WTC11 (cell line): ENCODE measurements at regions of chr1 and their contacts with region 1.

Region 1: DNA sequence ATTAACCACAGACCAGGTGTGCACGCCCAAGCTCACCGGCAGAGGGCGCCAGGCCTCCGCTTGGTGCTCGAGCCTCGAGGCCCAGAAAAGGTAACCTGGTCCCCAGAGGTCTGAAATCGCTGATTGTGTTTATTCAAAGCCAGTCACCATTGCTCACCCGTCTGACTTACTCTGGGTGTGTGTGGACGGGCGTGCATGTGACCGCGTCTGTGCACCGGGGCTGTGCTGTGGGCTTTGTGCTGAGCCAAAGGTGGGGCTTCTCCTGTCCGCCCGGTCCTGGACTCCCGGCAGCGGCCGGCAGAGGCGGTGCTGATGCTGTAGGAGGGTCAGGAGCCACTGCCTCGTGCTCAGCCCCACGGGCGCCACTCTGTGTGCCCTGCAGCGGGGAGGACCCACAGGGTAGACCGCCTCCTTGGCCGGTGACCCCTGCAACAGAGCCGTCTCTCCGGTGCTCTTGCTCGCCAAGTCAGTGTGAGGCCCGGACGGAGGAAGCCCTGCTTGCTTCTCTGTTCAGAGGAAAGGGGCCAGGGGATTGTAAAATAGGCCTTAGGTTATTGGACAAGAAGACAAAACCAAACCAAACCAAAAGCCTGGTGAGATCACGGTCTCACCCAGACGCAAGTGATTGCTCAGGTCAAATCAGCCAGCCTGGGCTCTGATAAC is 32.0 kb upstream of the BTG2 start:
- DNase-seq: peak; percentile 90
- ATAC-seq: peak; percentile 70
- H3K4me3 Mint-ChIP-seq: peak overlapping the region; percentile 59
- H3K27ac Mint-ChIP-seq: no peak overlapping the region
- H3K4me1 Mint-ChIP-seq: peaks cover 13% of the 10 kb centered on the region
- H3K27me3 Mint-ChIP-seq: peaks cover 47% of the 10 kb centered on the region
- CTCF ChIP-seq: peak; percentile 97

Region 2: DNA sequence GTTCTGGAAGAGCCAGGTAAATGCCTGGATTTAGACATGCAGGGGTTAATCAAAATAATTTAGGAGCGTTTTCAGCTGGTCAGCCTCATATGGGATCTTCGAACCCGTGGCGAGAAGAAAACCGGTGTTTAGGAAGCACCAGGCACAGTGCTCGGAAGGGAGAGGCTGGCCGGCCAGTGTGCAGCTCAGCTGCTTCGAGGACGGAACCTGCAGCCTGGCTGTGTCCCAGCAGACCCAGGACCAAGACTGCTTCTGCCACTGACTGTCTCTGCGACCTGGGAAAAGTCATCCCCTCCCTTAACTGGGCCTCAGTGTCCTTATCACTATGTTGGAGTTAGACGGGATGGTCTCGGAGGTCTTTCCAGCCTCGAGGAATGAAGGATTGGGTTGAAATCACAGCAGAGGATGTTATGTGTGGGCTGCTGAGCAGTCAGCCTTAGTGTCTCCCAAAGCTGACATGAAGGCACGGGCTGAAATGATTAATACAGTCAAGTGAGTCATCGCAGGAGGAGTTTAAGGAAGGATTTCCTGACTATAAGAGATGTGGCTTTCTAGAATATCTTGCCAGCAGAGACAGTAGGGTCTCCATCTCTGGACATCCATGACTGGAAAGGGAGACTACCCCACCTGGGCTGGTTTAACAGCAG is 226.2 kb before region 1 on chr1:
- CTCF ChIA-PET with region 1: interaction called, 369 read pairs
- POLR2A ChIA-PET with region 1: no interaction called
- DNase-seq: no peak
- ATAC-seq: no peak
- H3K4me3 Mint-ChIP-seq: no peak overlapping the region
- H3K27ac Mint-ChIP-seq: no peak overlapping the region
- H3K4me1 Mint-ChIP-seq: peaks cover 20% of the 10 kb centered on the region
- H3K27me3 Mint-ChIP-seq: no peaks in the 10 kb centered on the region; the same call in 1 of the 2 replicates
- CTCF ChIP-seq: no peak

Region 3: GRCh38 chr1:203304919-203305808 is 31.8 kb after region 1 on chr1 and contains the start of gene BTG2:
- CTCF ChIA-PET with region 1: interaction called, 66 read pairs
- POLR2A ChIA-PET with region 1: interaction called, 3 read pairs
- DNase-seq: peak; percentile 84
- ATAC-seq: peak; percentile 80
- H3K4me3 Mint-ChIP-seq: peak within 1 kb of the TSS; percentile 79
- H3K27ac Mint-ChIP-seq: no peak within 1 kb of the TSS
- H3K4me1 Mint-ChIP-seq: peaks cover 55% of the 10 kb centered on the region
- H3K27me3 Mint-ChIP-seq: peaks cover 96% of the 10 kb centered on the region
- CTCF ChIP-seq: no peak
- total RNA-seq, gene BTG2: 13.5 to 19.4 TPM (median 15.4 TPM) in 3 replicates

Region 4: GRCh38 chr1:203326830-203327683 is 53.7 kb after region 1 on chr1:
- CTCF ChIA-PET with region 1: interaction called, 99 read pairs
- POLR2A ChIA-PET with region 1: interaction called, 3 read pairs
- DNase-seq: peak; percentile 91
- ATAC-seq: peak; percentile 85
- H3K4me3 Mint-ChIP-seq: peak overlapping the region; percentile 69
- H3K27ac Mint-ChIP-seq: no peak overlapping the region
- H3K4me1 Mint-ChIP-seq: peaks cover 50% of the 10 kb centered on the region
- H3K27me3 Mint-ChIP-seq: peaks cover 62% of the 10 kb centered on the region
- CTCF ChIP-seq: no peak

Region 5: DNA sequence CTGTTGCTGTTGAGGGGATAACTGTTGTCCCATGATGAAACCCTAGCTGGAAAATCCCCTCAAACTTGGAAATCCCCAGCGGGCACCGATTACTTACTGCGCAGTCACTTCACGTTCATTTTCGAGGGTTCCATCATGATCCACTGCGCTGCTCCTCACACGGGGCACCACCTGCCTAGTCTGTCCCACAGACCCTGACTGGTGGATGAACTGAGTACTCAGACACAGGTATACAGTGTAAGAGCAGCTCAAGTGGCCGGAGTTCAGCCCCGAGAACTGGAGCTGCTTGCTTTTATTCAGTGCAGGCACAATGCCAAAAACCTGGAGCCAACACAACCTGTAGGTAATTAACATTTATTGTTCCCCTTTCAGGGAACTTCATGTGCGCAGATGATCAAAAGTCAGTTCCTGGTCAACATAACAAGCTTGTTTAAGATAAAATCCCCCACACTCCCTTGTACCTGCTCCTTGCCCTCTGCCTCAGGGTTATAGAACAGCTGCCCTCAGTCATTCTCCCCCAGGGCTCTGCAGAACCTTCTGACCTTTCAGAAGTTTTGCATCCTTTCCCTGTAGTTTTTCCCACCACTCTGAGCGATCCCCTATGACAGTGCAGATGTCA is 155.8 kb after region 1 on chr1:
- CTCF ChIA-PET with region 1: no interaction called
- POLR2A ChIA-PET with region 1: no interaction called
- DNase-seq: no peak
- ATAC-seq: no peak
- H3K4me3 Mint-ChIP-seq: no peak overlapping the region
- H3K27ac Mint-ChIP-seq: no peak overlapping the region
- H3K4me1 Mint-ChIP-seq: peaks cover 5% of the 10 kb centered on the region
- H3K27me3 Mint-ChIP-seq: peaks cover 3% of the 10 kb centered on the region
- CTCF ChIP-seq: no peak

Region 6: DNA sequence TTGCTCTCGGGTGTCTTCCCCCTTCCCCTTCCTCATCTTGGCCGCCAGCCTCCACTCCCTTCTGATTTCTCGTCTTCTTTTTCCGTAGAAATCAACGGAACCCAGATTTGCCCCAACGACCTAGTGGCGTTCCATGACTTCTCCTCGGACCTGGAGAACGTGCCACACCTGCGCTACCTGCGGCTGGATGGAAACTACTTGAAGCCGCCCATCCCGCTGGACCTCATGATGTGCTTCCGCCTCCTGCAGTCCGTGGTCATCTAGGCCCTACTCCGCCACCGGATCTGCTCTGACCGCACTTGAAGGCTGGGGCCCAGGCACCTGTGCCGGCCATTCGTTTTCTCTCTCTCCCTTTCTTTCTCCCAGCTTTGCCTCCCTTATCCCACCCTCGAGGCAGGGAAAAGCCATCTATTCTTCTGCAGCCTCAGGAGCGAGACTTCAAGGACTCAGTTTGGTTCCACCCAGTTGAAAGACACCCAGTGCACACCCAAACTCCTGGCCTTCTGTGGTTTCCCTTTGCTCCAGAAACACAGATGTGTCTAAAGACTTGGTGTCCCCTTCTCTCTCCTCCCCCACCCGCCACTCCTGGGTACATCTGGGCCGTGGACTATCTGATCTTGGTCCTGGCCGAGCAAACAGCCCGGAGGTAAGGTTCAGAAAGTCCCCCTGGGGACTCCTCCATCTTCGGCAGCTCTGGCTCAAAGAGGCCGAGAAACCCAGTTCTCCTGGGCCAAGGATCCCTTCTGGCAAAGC is 213.5 kb after region 1 on chr1:
- CTCF ChIA-PET with region 1: interaction called, 33 read pairs
- POLR2A ChIA-PET with region 1: no interaction called
- DNase-seq: no peak
- ATAC-seq: no peak
- H3K4me3 Mint-ChIP-seq: peak overlapping the region; percentile 72
- H3K27ac Mint-ChIP-seq: peak overlapping the region; percentile 45
- H3K4me1 Mint-ChIP-seq: peaks cover 14% of the 10 kb centered on the region
- H3K27me3 Mint-ChIP-seq: peaks cover 7% of the 10 kb centered on the region; the same call in 1 of the 2 replicates
- CTCF ChIP-seq: no peak